ENCODE measurements at regions of chr17 and their contacts with region 1.

Region 1: DNA sequence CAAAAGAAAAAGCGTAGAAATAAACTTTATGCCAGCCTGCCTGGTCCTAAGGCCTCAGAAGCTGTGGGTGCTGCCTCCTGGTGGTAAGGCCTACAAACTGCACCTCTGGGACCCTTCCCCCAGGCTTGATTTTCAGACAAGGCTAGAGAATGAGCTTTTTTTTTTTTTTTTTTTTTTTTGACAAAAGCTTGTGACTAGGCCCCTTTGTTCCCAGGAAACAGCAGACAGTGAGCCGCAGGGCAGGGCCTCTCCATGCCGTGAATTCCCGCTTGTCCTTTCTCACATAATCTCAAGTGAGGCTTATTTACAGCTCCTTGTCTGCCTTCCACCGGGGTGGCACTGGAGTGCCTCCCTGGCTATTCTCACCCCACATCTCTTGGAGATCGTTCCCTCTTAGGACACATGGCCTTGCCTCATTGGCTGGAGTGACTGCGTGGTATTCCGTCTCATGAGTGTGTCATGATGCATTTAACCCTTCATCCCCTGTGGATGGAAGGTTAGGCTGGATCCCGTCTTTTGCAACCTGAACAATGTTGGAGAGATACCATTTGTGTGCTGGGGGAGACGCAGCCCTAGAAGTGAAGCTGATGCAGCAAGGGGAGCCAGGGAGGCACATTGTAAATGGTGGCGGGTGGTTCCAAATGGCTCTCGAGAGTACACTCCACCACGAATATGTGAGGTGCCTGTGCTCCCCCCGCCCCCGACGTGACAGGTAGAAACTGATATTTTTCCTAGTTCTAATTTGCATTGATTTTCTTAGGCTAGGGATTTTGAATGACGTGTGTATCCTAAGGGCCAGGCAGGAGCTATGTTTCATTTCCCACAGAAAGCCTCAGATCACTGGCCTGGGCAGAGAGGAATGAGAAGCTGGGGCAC is 49.6 kb downstream of the USP22 start:
- DNase-seq: peak; percentile 81 to 96
- ATAC-seq: peak; percentile 27 to 61; a peak in 3 of 6 replicates
- H3K4me3 ChIP-seq: no peak overlapping the region
- H3K27ac ChIP-seq: no peak overlapping the region
- H3K4me1 ChIP-seq: 0 out of 3 replicates have a peak, but pooled peaks cover 4% of the 10 kb centered on the region
- CTCF ChIP-seq: peak; percentile 94
- EP300 ChIP-seq: no peak
- POLR2A ChIP-seq: no peak
- RAD21 ChIP-seq: peak; percentile 80 to 83

Region 2: DNA sequence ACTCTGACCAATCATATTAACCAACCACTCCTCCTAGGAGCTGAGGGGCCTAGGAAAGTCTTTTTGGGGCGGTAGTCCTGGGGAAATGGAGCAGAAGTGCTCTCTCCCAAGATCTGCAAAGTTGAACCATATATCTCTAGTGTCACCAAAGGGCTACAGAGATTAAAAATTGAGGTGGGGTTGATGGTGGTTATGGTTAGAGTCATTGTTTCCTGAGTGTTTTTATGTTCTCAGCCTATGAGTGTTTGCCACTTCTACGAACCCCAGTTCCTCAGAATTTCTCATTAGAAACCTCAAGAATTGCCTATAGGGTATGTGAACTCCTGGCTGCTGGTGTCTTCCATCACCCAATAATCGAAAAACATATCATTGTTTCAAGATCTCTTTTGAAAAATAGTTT is 195.9 kb before region 1 on chr17:
- CTCF ChIA-PET with region 1: interaction called, 36 read pairs
- POLR2A ChIA-PET with region 1: no interaction called
- DNase-seq: no peak
- ATAC-seq: no peak
- H3K4me3 ChIP-seq: no peak overlapping the region
- H3K27ac ChIP-seq: no peak overlapping the region
- H3K4me1 ChIP-seq: no peaks in the 10 kb centered on the region
- CTCF ChIP-seq: no peak
- EP300 ChIP-seq: no peak
- POLR2A ChIP-seq: no peak
- RAD21 ChIP-seq: no peak

Region 3: DNA sequence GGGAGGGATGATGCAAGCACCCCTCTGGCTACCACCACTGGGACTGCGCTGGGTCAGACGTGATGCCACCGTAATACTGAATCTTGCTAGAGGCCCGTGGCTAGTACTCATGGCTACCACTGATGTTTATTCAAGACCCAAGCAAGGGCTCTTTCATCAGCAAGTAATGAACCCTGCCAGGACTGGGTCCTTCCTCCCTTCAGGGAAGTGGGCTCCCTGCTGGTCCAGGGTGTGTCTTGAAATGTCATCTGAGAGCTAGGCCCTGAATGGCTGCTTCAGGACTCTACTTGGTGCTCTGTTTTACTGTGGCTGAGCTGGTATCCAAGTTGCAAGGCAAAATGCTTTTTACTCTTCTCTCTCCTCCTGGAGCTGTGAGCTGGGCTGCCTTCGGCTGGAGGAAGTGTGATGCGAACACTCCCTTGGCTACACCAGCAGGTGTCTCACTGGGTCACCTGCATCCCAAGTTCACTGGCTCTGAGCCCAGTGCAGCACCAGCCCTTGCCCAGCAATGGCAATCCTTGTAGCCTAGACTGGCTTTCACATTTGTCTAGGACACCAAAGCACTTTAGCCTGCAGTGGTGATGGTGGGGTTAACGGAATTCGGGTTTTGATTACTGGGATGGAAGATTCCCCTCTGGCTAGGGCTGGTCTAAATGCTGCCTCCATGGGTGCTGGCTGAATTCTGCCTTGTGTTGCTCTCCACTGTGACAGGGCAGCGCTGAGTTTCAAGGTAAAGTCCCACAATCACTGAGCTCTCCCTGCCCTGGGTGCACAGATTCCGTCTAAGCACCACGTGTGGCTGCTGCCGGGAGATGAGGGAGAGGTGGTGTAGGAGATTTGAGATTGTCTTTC is 49.0 kb before region 1 on chr17:
- CTCF ChIA-PET with region 1: interaction called, 20 read pairs
- POLR2A ChIA-PET with region 1: no interaction called
- DNase-seq: peak in 1 of 2 experiments; percentile 54
- ATAC-seq: peak; percentile 93 to 95
- H3K4me3 ChIP-seq: no peak overlapping the region
- H3K27ac ChIP-seq: no peak overlapping the region
- H3K4me1 ChIP-seq: no peaks in the 10 kb centered on the region
- CTCF ChIP-seq: peak; percentile 41; the same call in 1 of the 3 replicates
- EP300 ChIP-seq: no peak
- POLR2A ChIP-seq: no peak
- RAD21 ChIP-seq: peak; percentile 51 to 56

Region 4: GRCh38 chr17:20966870-20967269 is 26.4 kb before region 1 on chr17:
- CTCF ChIA-PET with region 1: interaction called, 10 read pairs
- POLR2A ChIA-PET with region 1: no interaction called
- DNase-seq: no peak
- ATAC-seq: no peak
- H3K4me3 ChIP-seq: no peak overlapping the region
- H3K27ac ChIP-seq: no peak overlapping the region
- H3K4me1 ChIP-seq: no peaks in the 10 kb centered on the region
- CTCF ChIP-seq: no peak
- EP300 ChIP-seq: no peak
- POLR2A ChIP-seq: no peak
- RAD21 ChIP-seq: no peak

Region 5: DNA sequence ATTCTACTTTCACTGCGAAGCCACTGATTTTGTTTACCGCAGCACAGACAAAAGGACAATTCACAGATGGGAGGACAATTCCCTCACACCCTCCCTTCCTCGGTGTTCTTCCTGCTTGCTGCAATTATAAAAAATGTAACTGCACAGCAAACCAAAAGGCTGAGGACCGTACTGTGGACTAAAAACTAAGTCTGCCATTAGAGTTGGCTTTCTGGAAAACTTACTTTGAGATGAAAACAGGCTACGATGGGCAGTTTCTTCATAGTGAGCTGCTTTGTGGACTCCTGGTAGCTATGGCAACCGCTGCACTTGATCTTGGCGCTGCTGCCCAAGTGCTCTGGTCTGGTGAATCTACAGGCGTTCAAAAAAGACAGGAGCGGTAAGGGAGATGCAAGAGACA is 14.4 kb after region 1 on chr17:
- CTCF ChIA-PET with region 1: interaction called, 15 read pairs
- POLR2A ChIA-PET with region 1: no interaction called
- DNase-seq: no peak
- ATAC-seq: no peak
- H3K4me3 ChIP-seq: no peak overlapping the region
- H3K27ac ChIP-seq: no peak overlapping the region
- H3K4me1 ChIP-seq: no peaks in the 10 kb centered on the region
- CTCF ChIP-seq: no peak
- EP300 ChIP-seq: no peak
- POLR2A ChIP-seq: no peak
- RAD21 ChIP-seq: no peak

Region 6: DNA sequence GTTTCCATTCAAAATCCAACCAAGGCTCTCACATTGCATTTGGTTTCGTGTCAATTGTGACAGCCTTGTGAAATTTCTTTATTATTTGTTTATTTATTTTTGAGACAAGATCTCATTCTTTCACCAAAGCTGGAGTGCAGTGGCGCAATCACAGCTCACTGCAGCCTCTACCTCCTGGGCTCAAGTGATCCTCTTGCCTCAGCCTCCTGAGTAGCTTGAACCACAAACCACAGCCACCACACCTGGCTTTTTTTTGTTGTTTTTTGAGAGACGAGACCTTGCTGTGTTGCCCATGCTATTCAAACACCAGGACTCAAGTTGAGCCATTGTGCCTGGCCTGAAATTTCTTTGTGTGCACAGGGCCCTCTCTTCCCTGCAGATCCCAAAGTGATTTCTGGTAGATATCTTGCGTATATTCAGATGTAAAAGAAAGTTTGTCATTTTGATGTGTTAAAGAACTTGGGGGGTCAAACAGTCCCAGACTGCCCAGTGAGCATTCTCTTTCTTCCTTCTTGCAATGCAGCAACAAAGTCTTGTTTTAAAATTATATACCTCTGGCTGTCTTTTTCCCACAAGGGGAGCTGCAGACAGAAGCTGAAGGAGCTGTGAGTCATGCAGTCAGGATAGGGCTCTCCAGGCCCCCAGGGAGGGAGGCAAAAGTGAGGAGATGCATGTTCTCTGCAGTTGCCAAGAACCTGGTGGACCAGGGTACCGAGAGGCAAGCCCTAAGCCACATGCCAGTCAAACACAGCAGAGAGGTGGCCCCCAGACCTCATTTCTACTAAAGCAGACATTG is 65.1 kb after region 1 on chr17:
- CTCF ChIA-PET with region 1: no interaction called
- POLR2A ChIA-PET with region 1: no interaction called
- DNase-seq: peak in 1 of 2 experiments; percentile 47
- ATAC-seq: peak; percentile 78 to 79
- H3K4me3 ChIP-seq: no peak overlapping the region
- H3K27ac ChIP-seq: no peak overlapping the region
- H3K4me1 ChIP-seq: no peaks in the 10 kb centered on the region
- CTCF ChIP-seq: no peak
- EP300 ChIP-seq: no peak
- POLR2A ChIP-seq: no peak
- RAD21 ChIP-seq: no peak

Measured in A549 (cell line).